Activated CD4-positive, alpha-beta T cell treated with anti-CD3 and anti-CD28 coated beads, Interleukin-2, amount 10 ng/mL, durations not matched to agents 7 days and 5 days (primary cell): ENCODE measurements at regions of chr5 and their contacts with region 1.

Region 1: DNA sequence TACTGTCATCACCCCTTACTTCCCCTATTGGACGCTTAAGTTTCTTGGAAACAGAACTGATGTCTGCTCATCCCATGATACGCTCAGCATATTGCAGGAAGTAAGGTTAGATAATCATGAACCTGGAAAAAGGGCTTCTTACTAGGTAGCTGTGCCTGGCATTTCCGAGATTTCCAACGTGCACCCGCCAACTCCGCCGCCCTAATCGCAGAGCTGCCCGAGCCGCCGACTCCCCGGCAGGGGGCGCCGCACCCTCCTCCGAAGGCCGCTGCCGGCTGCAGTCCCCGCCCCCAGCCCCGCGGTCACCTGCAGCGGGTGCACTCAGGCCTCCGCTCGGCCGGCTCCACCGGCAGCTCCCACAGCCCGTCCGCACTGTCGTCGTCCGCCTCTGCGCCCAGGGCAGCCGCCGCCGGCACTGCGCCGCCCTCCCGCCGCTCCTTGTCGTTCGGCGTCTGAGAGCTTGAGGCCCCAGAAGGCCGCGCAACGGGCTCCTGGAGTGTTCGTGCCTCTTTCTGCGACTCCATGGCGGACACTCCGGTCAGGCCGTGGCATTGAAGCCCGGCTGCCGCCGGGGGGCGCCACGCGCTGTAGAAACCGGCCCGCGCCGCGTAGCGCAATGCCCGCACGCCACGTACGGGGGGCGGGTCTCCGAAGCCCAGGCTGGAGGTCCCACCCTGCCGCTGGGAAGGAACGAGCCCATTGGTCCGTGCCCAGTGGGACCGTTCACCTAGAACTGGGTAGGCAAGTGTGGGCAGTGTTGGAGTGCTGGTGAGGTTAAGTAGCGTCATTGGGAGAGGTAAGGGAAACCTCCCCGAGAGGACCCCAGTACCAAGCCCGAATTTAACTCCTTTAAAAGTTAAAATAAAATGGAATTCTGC is at the start of gene DTWD2:
- DNase-seq: peak; percentile 89
- H3K4me3 Mint-ChIP-seq: peak within 1 kb of the TSS; percentile 72
- H3K27ac Mint-ChIP-seq: peak within 1 kb of the TSS; percentile 64
- H3K4me1 Mint-ChIP-seq: peaks cover 18% of the 10 kb centered on the region
- H3K27me3 Mint-ChIP-seq: no peaks in the 10 kb centered on the region
- total RNA-seq, gene DTWD2: 1.4 to 2.0 TPM

Region 2: GRCh38 chr5:118919016-118919415 is 69.2 kb before region 1 on chr5:
- CTCF ChIA-PET with region 1: no interaction called
- POLR2A ChIA-PET with region 1: no interaction called
- DNase-seq: no peak
- H3K4me3 Mint-ChIP-seq: no peak overlapping the region
- H3K27ac Mint-ChIP-seq: no peak overlapping the region
- H3K4me1 Mint-ChIP-seq: peaks cover 2% of the 10 kb centered on the region
- H3K27me3 Mint-ChIP-seq: no peaks in the 10 kb centered on the region

Region 3: GRCh38 chr5:118963169-118963568 is 25.1 kb before region 1 on chr5:
- CTCF ChIA-PET with region 1: no interaction called
- POLR2A ChIA-PET with region 1: no interaction called
- DNase-seq: no peak
- H3K4me3 Mint-ChIP-seq: no peak overlapping the region
- H3K27ac Mint-ChIP-seq: no peak overlapping the region
- H3K4me1 Mint-ChIP-seq: no peaks in the 10 kb centered on the region
- H3K27me3 Mint-ChIP-seq: no peaks in the 10 kb centered on the region

Region 4: GRCh38 chr5:119011186-119011585 is 23.0 kb after region 1 on chr5:
- CTCF ChIA-PET with region 1: interaction called, 10 read pairs
- POLR2A ChIA-PET with region 1: no interaction called
- DNase-seq: no peak
- H3K4me3 Mint-ChIP-seq: no peak overlapping the region
- H3K27ac Mint-ChIP-seq: no peak overlapping the region
- H3K4me1 Mint-ChIP-seq: no peaks in the 10 kb centered on the region
- H3K27me3 Mint-ChIP-seq: no peaks in the 10 kb centered on the region

Region 5: GRCh38 chr5:119019949-119020348 is 31.7 kb after region 1 on chr5:
- CTCF ChIA-PET with region 1: interaction called, 11 read pairs
- POLR2A ChIA-PET with region 1: no interaction called
- DNase-seq: no peak
- H3K4me3 Mint-ChIP-seq: no peak overlapping the region
- H3K27ac Mint-ChIP-seq: no peak overlapping the region
- H3K4me1 Mint-ChIP-seq: peaks cover 3% of the 10 kb centered on the region
- H3K27me3 Mint-ChIP-seq: no peaks in the 10 kb centered on the region

Region 6: DNA sequence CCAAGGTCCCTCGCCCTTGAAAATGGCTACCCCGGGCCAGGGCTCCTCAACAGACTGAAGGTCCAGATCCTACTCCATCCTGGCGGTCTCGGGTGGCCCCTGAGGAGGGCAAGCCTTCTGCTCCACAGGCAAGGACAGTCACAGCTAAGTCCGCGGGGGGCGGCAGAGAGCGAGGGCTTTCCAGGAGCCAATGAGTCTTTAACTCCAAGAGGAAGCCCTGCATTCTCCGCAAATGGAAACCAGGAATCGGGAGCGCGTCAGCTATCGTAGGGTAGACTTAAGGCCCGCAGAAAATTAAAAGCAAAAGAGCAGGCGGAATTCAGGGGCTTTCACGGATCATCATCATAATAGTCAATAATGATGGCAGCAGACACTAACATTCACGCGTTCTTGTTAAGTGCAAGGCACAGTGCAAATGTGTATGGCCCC is 279.7 kb after region 1 on chr5:
- CTCF ChIA-PET with region 1: interaction called, 13 read pairs
- POLR2A ChIA-PET with region 1: no interaction called
- DNase-seq: peak; percentile 90
- H3K4me3 Mint-ChIP-seq: peak overlapping the region; percentile 99
- H3K27ac Mint-ChIP-seq: peak overlapping the region; percentile 96
- H3K4me1 Mint-ChIP-seq: peaks cover 53% of the 10 kb centered on the region
- H3K27me3 Mint-ChIP-seq: no peaks in the 10 kb centered on the region

Region 7: DNA sequence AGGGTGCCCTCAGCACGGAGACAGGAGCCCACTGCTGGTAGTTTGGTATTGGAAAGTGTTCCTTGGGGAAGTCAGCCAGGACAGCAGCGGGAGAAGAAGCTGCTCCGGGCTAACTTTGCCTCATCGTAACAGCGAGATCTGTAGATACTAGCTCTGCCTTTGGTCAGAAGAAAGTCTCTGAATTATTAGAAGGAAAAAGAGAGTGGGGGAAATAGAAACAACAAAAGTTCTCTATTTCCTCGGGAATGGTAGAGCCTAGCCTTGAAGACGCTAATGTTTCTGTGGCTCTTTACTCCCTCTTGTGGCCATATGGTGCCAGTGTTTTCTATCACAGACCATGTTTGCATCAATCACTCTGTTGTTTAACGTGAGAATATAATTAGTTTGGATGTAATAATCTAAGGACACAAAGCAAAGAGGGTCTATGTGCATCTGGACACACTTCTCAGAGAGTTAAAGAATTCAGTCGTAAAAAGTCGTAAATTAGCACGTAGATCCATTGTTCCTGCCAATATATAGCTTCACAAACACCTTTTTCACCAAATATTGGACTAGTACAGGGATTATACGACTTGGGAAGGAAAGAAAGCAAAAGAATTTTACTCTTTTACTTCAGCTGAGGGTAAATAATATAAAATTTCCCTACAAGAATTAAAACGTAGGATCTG is 423.8 kb after region 1 on chr5:
- CTCF ChIA-PET with region 1: interaction called, 54 read pairs
- POLR2A ChIA-PET with region 1: interaction called, 4 read pairs
- DNase-seq: peak; percentile 66
- H3K4me3 Mint-ChIP-seq: peak overlapping the region; percentile 67
- H3K27ac Mint-ChIP-seq: no peak overlapping the region
- H3K4me1 Mint-ChIP-seq: peaks cover 33% of the 10 kb centered on the region
- H3K27me3 Mint-ChIP-seq: peaks cover 9% of the 10 kb centered on the region

Region 8: GRCh38 chr5:119420169-119420568 is 431.9 kb after region 1 on chr5:
- CTCF ChIA-PET with region 1: interaction called, 16 read pairs
- POLR2A ChIA-PET with region 1: no interaction called
- DNase-seq: no peak
- H3K4me3 Mint-ChIP-seq: no peak overlapping the region
- H3K27ac Mint-ChIP-seq: no peak overlapping the region
- H3K4me1 Mint-ChIP-seq: peaks cover 14% of the 10 kb centered on the region
- H3K27me3 Mint-ChIP-seq: peaks cover under 1% of the 10 kb centered on the region

Region 9: DNA sequence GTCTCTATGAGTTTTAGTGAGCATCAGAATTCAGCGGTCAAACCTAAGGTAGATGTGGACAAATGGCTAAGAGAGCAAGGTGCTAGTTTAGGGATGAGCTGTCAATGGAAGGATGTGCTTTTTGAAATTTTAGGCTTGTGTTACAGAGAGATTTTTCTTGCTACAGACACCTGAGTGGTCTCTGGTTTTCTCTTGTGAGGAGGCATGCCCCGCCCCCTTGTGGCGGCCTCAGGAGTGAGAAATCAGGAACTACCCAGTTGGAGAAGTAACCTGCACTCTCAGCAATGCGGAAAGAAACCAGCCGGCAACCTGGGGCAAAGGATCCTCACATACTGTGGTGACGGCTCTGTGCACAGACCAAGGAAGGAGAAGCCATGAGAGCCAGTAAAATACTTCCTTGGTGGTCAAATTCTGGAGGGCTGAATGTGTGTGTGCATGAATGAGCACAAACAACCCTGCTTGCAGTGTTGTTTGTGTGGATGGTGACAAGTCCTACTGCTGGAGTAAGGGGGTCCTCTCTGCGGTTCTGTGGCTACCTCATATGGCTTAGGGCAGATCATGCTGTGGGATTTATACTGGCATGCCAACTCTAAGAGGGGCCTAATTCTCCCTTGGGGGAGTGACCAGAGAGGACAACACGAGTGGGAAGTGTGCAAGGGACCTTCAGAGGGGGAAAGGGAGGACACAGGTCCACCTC is 447.4 kb after region 1 on chr5:
- CTCF ChIA-PET with region 1: interaction called, 15 read pairs
- POLR2A ChIA-PET with region 1: no interaction called
- DNase-seq: peak; percentile 73
- H3K4me3 Mint-ChIP-seq: no peak overlapping the region
- H3K27ac Mint-ChIP-seq: no peak overlapping the region
- H3K4me1 Mint-ChIP-seq: peaks cover 12% of the 10 kb centered on the region
- H3K27me3 Mint-ChIP-seq: peaks cover 18% of the 10 kb centered on the region